Vagina (tissue), 2 donors: ENCODE measurements at regions of chr20 and their contacts with region 1.

Region 1: GRCh38 chr20:55191939-55192338 is 716.5 kb downstream of the DOK5 start:
- DNase-seq: no peak
- H3K4me3 ChIP-seq: no peak overlapping the region
- H3K27ac ChIP-seq: no peak overlapping the region
- H3K4me1 ChIP-seq: no peaks in the 10 kb centered on the region
- H3K27me3 ChIP-seq: no peaks in the 10 kb centered on the region
- CTCF ChIP-seq: no peak
- POLR2A ChIP-seq: no peak

Region 2: GRCh38 chr20:53738039-53738944 is 1453.6 kb before region 1 on chr20:
- intact Hi-C with region 1: no loop called
- DNase-seq: no peak
- H3K4me3 ChIP-seq: peak overlapping the region; percentile 10 to 19
- H3K27ac ChIP-seq: peak overlapping the region; percentile 84
- H3K4me1 ChIP-seq: peaks cover 38% of the 10 kb centered on the region
- H3K27me3 ChIP-seq: no peaks in the 10 kb centered on the region
- CTCF ChIP-seq: no peak
- POLR2A ChIP-seq: peak in 1 of 2 donors; percentile 41

Region 3: GRCh38 chr20:55132523-55132922 is 59.4 kb before region 1 on chr20:
- intact Hi-C with region 1: no loop called
- DNase-seq: no peak
- H3K4me3 ChIP-seq: no peak overlapping the region
- H3K27ac ChIP-seq: no peak overlapping the region
- H3K4me1 ChIP-seq: no peaks in the 10 kb centered on the region
- H3K27me3 ChIP-seq: no peaks in the 10 kb centered on the region
- CTCF ChIP-seq: no peak
- POLR2A ChIP-seq: no peak

Region 4: GRCh38 chr20:55172310-55172995 is 19.5 kb before region 1 on chr20:
- intact Hi-C with region 1: loop called (anchors 2 kb)
- DNase-seq: no peak
- H3K4me3 ChIP-seq: no peak overlapping the region
- H3K27ac ChIP-seq: no peak overlapping the region
- H3K4me1 ChIP-seq: no peaks in the 10 kb centered on the region
- H3K27me3 ChIP-seq: no peaks in the 10 kb centered on the region
- CTCF ChIP-seq: no peak
- POLR2A ChIP-seq: no peak

Region 5: GRCh38 chr20:55353206-55353605 is 161.3 kb after region 1 on chr20:
- intact Hi-C with region 1: no loop called
- DNase-seq: no peak
- H3K4me3 ChIP-seq: no peak overlapping the region
- H3K27ac ChIP-seq: no peak overlapping the region
- H3K4me1 ChIP-seq: no peaks in the 10 kb centered on the region
- H3K27me3 ChIP-seq: no peaks in the 10 kb centered on the region
- CTCF ChIP-seq: no peak
- POLR2A ChIP-seq: no peak